Activated B cell treated with CpG ODN at 0.5 μM for 24 hours (primary cell): ENCODE measurements at regions of chr5 and their contacts with region 1.

Region 1: GRCh38 chr5:134527146-134527960 is 1.9 kb downstream of the JADE2 start:
- DNase-seq: peak; percentile 73
- ATAC-seq: peak; percentile 49
- H3K4me3 Mint-ChIP-seq: peak overlapping the region; percentile 98
- H3K27ac Mint-ChIP-seq: peak overlapping the region; percentile 85
- H3K4me1 Mint-ChIP-seq: peaks cover 58% of the 10 kb centered on the region
- H3K27me3 Mint-ChIP-seq: no peaks in the 10 kb centered on the region
- CTCF ChIP-seq: no peak

Region 2: GRCh38 chr5:134176511-134177368 is 350.6 kb before region 1 on chr5 and contains the start of gene SKP1:
- CTCF ChIA-PET with region 1: no interaction called
- POLR2A ChIA-PET with region 1: no interaction called
- intact Hi-C with region 1: loop called (anchors 1 kb)
- DNase-seq: peak; percentile 91
- ATAC-seq: peak; percentile 86
- H3K4me3 Mint-ChIP-seq: peak within 1 kb of the TSS; percentile 93
- H3K27ac Mint-ChIP-seq: peak within 1 kb of the TSS; percentile 96
- H3K4me1 Mint-ChIP-seq: peaks cover 26% of the 10 kb centered on the region
- H3K27me3 Mint-ChIP-seq: no peaks in the 10 kb centered on the region
- CTCF ChIP-seq: no peak
- total RNA-seq, gene SKP1: 193 and 211 TPM in 2 replicates

Region 3: DNA sequence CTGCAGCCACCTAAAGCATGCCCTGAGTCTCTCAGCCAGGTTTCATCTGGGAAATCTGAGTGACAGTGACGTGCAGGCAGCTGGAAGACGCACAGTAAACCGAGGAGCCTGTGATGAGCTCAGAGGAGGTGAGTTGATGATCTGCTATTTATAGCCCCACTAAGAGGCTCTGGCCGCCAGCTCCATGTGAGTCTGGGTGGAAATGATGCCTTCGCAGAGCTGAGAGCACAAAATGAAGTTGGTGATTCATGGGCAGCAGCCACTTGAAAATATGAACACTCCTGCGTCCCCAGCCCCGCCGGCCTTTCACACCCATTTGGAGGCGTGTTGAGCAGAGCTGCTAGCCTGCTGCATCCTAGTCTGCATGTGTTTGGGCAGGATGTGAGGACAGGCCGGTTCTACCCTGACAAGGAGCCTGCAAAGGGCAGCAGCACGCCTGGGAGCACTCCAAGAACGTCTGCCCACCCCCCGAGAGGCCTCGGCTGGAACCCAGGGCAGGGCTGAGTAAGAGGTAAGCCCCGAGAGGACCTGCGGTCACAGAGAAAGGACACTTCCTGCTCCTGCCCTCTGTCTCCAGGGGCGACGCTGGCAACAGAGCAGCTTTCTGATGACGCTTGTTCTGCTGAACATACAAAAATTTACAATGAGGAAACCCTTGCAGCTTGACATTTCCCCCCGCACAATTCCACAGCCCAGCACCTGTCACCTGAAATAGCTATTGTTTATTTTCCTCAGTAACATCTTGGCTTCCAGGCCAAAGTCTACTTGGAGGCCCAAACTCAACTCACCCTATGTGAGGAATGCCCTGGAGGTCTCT is 90.6 kb before region 1 on chr5:
- CTCF ChIA-PET with region 1: interaction called, 5 read pairs
- POLR2A ChIA-PET with region 1: interaction called, 31 read pairs
- intact Hi-C with region 1: loop called (anchors 1 kb)
- DNase-seq: peak; percentile 64
- ATAC-seq: peak; percentile 95
- H3K4me3 Mint-ChIP-seq: peak overlapping the region; percentile 56
- H3K27ac Mint-ChIP-seq: peak overlapping the region; percentile 68
- H3K4me1 Mint-ChIP-seq: peaks cover 25% of the 10 kb centered on the region
- H3K27me3 Mint-ChIP-seq: no peaks in the 10 kb centered on the region
- CTCF ChIP-seq: no peak

Region 4: GRCh38 chr5:134503088-134503946 is 24.0 kb before region 1 on chr5:
- CTCF ChIA-PET with region 1: no interaction called
- POLR2A ChIA-PET with region 1: interaction called, 15 read pairs
- intact Hi-C with region 1: loop called (anchors 2 kb)
- DNase-seq: no peak
- ATAC-seq: peak; percentile 67
- H3K4me3 Mint-ChIP-seq: no peak overlapping the region
- H3K27ac Mint-ChIP-seq: no peak overlapping the region
- H3K4me1 Mint-ChIP-seq: peaks cover 13% of the 10 kb centered on the region
- H3K27me3 Mint-ChIP-seq: no peaks in the 10 kb centered on the region
- CTCF ChIP-seq: no peak

Region 5: GRCh38 chr5:134577796-134578363 is 50.5 kb after region 1 on chr5:
- CTCF ChIA-PET with region 1: interaction called, 21 read pairs
- POLR2A ChIA-PET with region 1: interaction called, 10 read pairs
- intact Hi-C with region 1: loop called (anchors 1 kb)
- DNase-seq: peak; percentile 72
- ATAC-seq: peak; percentile 72
- H3K4me3 Mint-ChIP-seq: no peak overlapping the region
- H3K27ac Mint-ChIP-seq: peak overlapping the region; percentile 27
- H3K4me1 Mint-ChIP-seq: peaks cover 17% of the 10 kb centered on the region
- H3K27me3 Mint-ChIP-seq: no peaks in the 10 kb centered on the region
- CTCF ChIP-seq: peak; percentile 55

Region 6: GRCh38 chr5:134648425-134649162 is 121.2 kb after region 1 on chr5 and contains the start of gene SEC24A:
- CTCF ChIA-PET with region 1: no interaction called
- POLR2A ChIA-PET with region 1: no interaction called
- intact Hi-C with region 1: loop called (anchors 1 kb)
- DNase-seq: peak; percentile 86
- ATAC-seq: peak; percentile 77
- H3K4me3 Mint-ChIP-seq: peak within 1 kb of the TSS; percentile 91
- H3K27ac Mint-ChIP-seq: peak within 1 kb of the TSS; percentile 96
- H3K4me1 Mint-ChIP-seq: peaks cover 22% of the 10 kb centered on the region
- H3K27me3 Mint-ChIP-seq: no peaks in the 10 kb centered on the region
- CTCF ChIP-seq: no peak
- total RNA-seq, gene SEC24A: 13.8 and 15.6 TPM in 2 replicates

Region 7: GRCh38 chr5:135053278-135053677 is 525.9 kb after region 1 on chr5:
- CTCF ChIA-PET with region 1: no interaction called
- POLR2A ChIA-PET with region 1: no interaction called
- intact Hi-C with region 1: no loop called
- DNase-seq: peak; percentile 53
- ATAC-seq: peak; percentile 95
- H3K4me3 Mint-ChIP-seq: peak overlapping the region; percentile 67
- H3K27ac Mint-ChIP-seq: peak overlapping the region; percentile 78
- H3K4me1 Mint-ChIP-seq: peaks cover 49% of the 10 kb centered on the region
- H3K27me3 Mint-ChIP-seq: peaks cover 41% of the 10 kb centered on the region
- CTCF ChIP-seq: no peak

Region 8: GRCh38 chr5:135085127-135085935 is 558.0 kb after region 1 on chr5:
- CTCF ChIA-PET with region 1: no interaction called
- POLR2A ChIA-PET with region 1: no interaction called
- intact Hi-C with region 1: no loop called
- DNase-seq: peak; percentile 0
- ATAC-seq: no peak
- H3K4me3 Mint-ChIP-seq: no peak overlapping the region
- H3K27ac Mint-ChIP-seq: no peak overlapping the region
- H3K4me1 Mint-ChIP-seq: no peaks in the 10 kb centered on the region
- H3K27me3 Mint-ChIP-seq: peaks cover 26% of the 10 kb centered on the region
- CTCF ChIP-seq: no peak